ENCODE measurements at regions of chrX and their contacts with region 1.

Region 1: DNA sequence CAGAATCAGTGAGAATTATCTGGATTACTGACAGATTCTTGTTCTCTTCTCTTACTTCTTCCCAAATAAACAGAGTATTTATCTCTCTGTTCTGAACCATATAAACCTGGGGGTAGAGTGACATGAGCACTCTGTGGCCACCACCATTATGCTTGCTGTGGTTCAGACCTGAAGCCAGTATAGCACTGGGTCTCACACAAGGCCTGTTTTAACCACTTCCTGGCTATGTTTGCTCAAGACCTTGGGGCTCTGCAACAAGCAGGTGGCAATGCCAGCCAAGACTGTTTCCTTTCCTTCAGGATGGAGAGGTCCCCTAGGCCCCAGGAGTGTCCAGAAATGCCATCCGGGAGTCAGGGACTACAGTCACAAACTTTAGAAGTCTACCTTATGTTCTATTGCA is 21.7 kb upstream of the HEPH start:
- DNase-seq: no peak
- H3K4me3 ChIP-seq: no peak overlapping the region
- H3K27ac ChIP-seq: no peak overlapping the region
- H3K4me1 ChIP-seq: no peaks in the 10 kb centered on the region
- H3K27me3 ChIP-seq: no peaks in the 10 kb centered on the region
- CTCF ChIP-seq: no peak

Region 2: DNA sequence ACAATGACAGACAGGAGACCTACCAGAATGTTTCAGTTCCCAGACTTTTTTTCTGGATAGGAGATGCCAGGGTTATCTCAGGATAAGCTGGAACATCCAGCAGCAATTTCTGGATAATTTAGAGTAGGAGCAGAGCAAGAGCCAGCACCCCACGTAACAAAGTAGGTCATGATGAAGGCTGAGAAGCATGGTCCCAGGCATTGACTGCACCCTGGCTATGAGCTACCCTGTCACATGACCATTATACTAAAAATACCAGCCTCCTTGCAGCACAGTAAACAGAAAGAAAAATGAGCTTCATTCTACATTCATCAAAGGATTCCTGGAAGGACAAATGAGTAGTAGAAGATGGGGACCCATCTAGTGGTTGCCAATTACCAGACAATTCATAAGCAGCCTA is 1154.0 kb after region 1 on chrX:
- intact Hi-C with region 1: loop called (anchors 10 kb)
- DNase-seq: no peak
- H3K4me3 ChIP-seq: no peak overlapping the region
- H3K27ac ChIP-seq: no peak overlapping the region
- H3K4me1 ChIP-seq: peaks cover 0 to 4% (median 0%) of the 10 kb centered on the region in 4 donors
- H3K27me3 ChIP-seq: no peaks in the 10 kb centered on the region
- CTCF ChIP-seq: no peak

Measured in tibial artery (tissue), 4 donors.